ENCODE measurements at regions of chr1 and their contacts with region 1.

Region 1: DNA sequence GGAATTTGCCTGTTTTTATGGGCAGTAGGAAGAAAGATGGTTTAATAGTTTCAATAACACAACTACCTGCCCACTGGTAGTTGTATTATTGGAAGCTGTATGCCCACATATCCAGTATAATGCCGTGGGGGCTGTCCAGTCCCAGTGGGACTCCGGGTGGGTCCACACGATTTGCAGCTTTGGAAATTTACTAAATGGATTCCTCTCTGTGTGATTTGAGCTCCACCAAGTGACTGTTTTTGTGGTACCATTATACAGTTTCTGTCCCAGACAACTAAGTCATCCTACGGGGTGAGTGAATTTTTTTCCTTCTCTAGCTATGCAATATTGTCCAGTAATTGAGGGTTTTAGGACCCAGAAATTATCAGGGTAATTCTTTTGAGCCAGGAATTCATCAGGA is 86.8 kb downstream of the PLA2G4A start:
- DNase-seq: no peak
- ATAC-seq: no peak
- H3K4me3 ChIP-seq: no peak overlapping the region
- H3K27ac ChIP-seq: no peak overlapping the region
- H3K4me1 ChIP-seq: no peaks in the 10 kb centered on the region
- H3K27me3 ChIP-seq: no peaks in the 10 kb centered on the region
- CTCF ChIP-seq: peak in 5 of 9 donors; percentile 15 to 35 (median 26)

Region 2: DNA sequence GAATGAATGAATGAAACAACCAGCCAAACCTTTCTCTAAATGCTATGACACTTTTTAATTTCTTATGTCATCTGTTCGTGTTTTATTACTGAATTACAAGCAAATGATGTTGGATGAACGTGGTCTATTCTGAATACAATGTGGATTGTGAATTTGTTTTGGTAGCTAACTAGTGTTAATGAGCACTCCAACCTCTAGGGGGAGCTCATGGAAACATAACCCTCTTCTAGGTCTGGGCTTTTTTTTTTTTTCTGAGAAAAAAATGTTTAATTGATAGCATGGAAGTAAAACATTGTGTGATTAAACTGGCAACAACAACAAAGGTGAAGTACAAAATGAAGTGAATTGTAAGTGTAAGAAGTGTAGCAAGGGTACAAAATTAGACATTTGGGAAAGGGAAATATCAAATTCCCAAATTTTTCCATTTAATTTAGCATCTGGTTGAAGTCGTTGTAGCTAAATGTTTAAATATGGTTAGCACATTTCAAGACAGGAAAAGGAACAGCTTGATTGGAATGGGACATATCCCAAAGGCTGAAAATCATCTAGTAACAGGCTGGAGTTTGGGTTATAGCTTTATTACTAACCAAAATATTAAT is 192.7 kb before region 1 on chr1:
- intact Hi-C with region 1: loop called in 1 of 10 experiments (anchors 5 kb)
- DNase-seq: peak in 1 of 2 donors; percentile 14
- ATAC-seq: no peak
- H3K4me3 ChIP-seq: no peak overlapping the region
- H3K27ac ChIP-seq: no peak overlapping the region
- H3K4me1 ChIP-seq: no peaks in the 10 kb centered on the region
- H3K27me3 ChIP-seq: no peaks in the 10 kb centered on the region
- CTCF ChIP-seq: peak in 7 of 9 donors; percentile 25 to 58 (median 44)

Region 3: DNA sequence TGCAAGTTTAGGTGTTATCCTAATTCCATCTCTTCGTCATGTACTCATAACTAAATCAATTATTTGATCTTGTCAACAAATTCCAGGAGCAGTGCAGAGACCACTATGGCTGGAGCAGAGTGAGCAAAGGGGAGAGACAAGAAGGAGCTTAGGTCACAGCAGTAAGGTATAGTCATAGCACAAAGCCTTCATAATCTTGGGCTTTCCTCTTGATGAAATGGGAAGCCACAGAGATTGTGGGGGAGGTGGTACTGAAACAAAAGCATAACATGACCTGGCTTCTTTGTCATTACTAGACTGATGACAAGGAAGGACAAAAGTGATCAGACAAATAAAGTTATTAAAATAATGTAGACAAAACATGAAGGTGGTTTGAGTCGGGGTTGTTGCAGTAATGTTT is 175.2 kb before region 1 on chr1:
- intact Hi-C with region 1: loop called in 1 of 10 experiments (anchors 10 kb)
- DNase-seq: no peak
- ATAC-seq: no peak
- H3K4me3 ChIP-seq: no peak overlapping the region
- H3K27ac ChIP-seq: no peak overlapping the region
- H3K4me1 ChIP-seq: no peaks in the 10 kb centered on the region
- H3K27me3 ChIP-seq: no peaks in the 10 kb centered on the region
- CTCF ChIP-seq: no peak